Mammary epithelial cell (primary cell): ENCODE measurements at regions of chr12 and their contacts with region 1.

Region 1: DNA sequence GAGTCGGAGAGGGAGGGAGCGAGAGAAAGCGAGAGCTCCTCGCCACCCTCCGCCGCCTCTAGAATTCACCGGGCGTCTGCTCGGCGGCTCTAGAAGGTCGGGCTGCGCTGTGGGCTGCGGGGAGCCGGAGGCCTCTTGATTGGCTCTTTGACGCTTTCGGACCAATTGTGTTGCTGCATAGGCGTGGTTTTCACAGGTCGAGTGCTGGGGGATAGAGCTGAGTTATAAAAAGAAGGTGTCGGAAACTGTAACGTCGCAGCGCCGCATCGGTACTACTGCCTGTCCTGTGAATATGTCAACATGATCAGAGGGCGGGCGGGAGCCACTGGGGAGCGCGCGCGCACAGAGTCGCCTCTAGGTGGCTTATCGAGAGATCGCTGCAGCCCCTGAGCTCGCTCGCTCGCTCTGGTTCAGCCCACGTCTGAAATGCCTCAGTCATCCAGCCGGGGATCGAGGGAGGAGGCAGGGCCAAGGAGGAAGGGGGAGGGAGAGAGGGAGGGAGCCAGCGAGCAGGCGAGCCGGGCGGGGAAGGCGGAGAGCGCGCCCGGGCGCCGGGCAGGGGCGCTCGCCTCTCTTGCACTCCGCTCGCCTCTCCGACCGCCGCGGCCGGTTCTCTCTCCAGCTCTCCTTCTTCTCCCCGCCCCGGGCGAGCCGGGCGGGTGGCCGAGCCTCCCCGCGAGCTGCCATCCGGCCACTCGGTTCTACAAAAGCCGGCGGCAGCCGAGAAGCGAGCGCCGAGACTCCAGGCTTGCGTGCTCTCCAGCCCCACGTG is at the start of gene TBX3:
- DNase-seq: peak; percentile 100
- H3K4me3 ChIP-seq: peak within 1 kb of the TSS; percentile 66 to 100 (median 81)
- H3K27ac ChIP-seq: peak within 1 kb of the TSS; percentile 94
- H3K4me1 ChIP-seq: peaks cover 9% of the 10 kb centered on the region
- H3K27me3 ChIP-seq: no peaks in the 10 kb centered on the region
- CTCF ChIP-seq: peak; percentile 32 to 62
- total RNA-seq, gene TBX3: 30.7 to 33.8 TPM

Region 2: DNA sequence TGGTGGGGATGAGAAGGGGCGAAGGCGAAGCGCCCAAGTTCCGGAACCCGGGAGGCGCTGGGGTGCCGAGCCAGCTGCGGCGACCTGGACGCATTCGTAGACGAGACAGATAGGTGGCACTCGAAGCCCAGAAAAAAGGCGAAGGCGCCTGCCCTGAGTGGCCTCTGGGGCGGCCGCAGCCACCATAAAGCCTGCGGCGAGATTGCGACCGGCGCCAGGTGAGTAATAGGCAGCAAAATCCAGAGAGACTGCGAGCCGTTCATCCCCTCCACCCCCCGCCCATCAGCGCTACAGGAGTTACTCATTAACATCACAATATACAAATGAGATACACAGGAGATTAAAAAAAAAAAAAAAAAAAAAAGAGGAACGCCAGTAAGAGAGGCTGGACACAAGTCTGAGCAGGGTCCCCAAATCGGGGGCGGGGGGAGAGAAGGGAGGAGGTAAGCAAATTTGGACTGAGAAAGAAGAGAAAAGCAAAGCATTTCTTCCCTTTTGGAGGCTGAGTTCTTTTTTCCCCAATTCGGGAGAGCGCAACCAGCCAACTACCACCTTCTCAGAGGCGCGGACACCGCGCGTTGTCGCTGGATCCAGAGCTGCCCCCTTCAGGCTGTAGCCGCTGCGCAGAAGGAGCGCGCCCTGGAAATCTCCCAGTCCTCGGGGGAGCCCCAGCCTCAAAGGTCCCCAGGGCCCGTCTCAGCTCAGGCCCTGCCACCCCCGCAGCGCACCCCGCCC is 16.0 kb before region 1 on chr12:
- CTCF ChIA-PET with region 1: interaction called, 8 read pairs
- dilution Hi-C with region 1: no loop called
- in situ Hi-C with region 1: no loop called
- intact Hi-C with region 1: loop called (anchors 1 kb)
- DNase-seq: peak; percentile 91
- H3K4me3 ChIP-seq: peak overlapping the region; percentile 43 to 60 (median 48)
- H3K27ac ChIP-seq: peak overlapping the region; percentile 75
- H3K4me1 ChIP-seq: peaks cover 41% of the 10 kb centered on the region
- H3K27me3 ChIP-seq: no peaks in the 10 kb centered on the region
- CTCF ChIP-seq: peak; percentile 35 to 69

Region 3: DNA sequence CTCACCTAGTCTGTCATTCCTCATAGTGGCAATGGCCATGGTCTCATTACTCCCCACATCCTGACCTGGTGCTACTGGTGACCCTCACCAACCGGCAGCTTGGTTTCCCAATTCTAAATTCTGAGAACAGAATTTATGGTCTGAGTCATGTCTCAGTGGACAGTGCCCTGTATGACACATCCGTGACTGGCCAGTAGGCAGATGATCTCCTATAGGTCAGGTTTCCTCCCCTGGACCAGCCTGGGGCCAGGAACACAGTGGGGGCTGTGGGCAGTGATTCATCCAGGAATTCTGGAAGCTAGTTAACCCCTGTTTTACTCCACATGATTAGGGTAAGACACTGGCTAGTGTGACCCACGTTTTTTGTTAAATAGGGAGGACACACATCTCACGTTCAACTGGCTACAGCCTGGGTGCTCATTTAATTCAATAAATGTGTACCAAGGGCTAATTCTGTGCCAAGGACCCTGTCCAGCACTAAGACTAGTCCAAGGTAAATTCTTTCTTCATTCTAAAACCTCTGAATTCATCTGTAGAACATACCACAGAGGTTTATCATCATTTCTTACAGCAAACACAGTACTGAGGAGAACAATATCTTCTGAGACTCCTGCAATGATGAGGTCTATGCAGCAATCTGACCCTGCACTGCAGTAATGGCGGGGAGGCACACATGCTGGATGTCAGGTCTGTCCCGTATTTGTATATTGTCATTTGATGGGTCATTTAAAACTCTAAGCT is 249.3 kb after region 1 on chr12:
- CTCF ChIA-PET with region 1: no interaction called
- dilution Hi-C with region 1: no loop called
- in situ Hi-C with region 1: no loop called
- intact Hi-C with region 1: loop called (anchors 5 kb)
- DNase-seq: peak; percentile 83
- H3K4me3 ChIP-seq: no peak overlapping the region
- H3K27ac ChIP-seq: peak overlapping the region; percentile 57
- H3K4me1 ChIP-seq: peaks cover 25% of the 10 kb centered on the region
- H3K27me3 ChIP-seq: no peaks in the 10 kb centered on the region
- CTCF ChIP-seq: no peak

Region 4: DNA sequence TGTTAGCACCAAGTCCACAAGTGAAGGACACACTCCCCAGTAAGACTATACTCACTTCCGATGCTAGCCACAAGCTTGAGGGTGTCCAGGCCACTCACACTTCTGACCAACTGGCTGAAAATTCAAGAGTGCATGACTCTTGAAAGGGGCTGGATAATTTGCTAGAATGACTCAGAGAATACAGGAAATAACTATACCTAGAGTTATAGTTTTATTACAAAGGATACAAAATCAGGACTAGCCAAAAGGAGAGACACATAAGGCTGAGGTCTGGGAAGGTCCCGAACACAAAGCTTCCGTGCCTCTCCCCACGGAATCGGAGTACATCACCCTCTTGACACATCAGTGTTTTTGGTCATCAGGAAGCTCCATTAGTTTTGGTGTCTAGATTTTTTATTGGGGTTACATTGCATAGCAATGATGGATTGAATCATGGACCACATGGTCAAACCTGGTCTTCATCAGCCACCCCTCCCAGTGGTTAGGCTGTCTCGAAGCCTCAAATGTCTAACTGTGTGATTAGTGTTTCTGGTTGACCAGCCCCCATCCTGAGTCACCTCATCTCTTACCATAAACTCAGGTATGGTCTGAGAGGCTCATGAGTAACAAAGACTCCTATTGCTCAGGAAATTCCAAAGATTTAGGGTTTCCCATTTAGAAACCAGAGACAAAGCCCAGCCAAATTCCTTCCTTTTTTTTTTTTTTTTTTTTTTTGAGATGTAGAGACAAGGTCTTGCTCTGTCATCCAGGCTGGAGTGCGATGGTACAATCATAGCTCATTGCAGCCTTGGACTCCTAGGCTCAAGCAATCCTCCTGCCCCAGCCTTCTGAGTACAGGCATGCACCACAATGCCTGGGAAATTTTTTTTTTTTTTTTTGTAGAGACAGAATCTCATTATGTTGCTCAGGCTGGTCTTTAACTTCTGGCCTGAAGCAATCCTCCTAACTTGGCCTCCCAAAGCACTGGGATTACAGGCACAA is 471.7 kb after region 1 on chr12:
- CTCF ChIA-PET with region 1: no interaction called
- dilution Hi-C with region 1: loop called (anchors 5 kb)
- in situ Hi-C with region 1: no loop called
- intact Hi-C with region 1: loop called (anchors 1 kb)
- DNase-seq: peak; percentile 100
- H3K4me3 ChIP-seq: no peak overlapping the region
- H3K27ac ChIP-seq: peak overlapping the region; percentile 83
- H3K4me1 ChIP-seq: peaks cover 31% of the 10 kb centered on the region
- H3K27me3 ChIP-seq: no peaks in the 10 kb centered on the region
- CTCF ChIP-seq: no peak

Region 5: DNA sequence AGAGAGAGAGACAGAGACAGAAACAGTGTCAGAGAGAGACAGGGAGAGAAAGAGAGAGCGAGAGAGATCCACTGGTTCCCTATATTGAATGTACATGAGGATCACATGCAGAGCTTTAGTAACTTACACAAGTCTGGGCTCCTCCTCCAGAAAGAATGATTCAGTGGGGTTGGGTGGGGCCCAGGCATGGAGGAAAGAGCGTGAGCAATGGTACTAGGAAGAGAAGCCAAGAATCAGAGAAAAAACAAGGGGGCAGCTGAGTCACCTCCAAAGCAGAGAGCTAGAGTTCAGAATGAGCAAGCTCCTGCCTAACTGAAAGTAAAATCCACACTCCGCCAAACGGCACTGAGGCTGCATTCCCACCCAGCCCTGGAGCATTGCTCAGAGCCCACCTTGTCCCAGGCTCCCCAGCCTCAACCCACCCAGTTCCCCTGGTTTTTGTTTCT is 669.7 kb after region 1 on chr12:
- CTCF ChIA-PET with region 1: no interaction called
- dilution Hi-C with region 1: no loop called
- in situ Hi-C with region 1: no loop called
- intact Hi-C with region 1: loop called (anchors 5 kb)
- DNase-seq: peak; percentile 99
- H3K4me3 ChIP-seq: peak overlapping the region; percentile 41 to 51 (median 47)
- H3K27ac ChIP-seq: peak overlapping the region; percentile 96
- H3K4me1 ChIP-seq: peaks cover 17% of the 10 kb centered on the region
- H3K27me3 ChIP-seq: no peaks in the 10 kb centered on the region
- CTCF ChIP-seq: no peak

Region 6: GRCh38 chr12:115383669-115384068 is 699.4 kb after region 1 on chr12:
- CTCF ChIA-PET with region 1: no interaction called
- dilution Hi-C with region 1: no loop called
- in situ Hi-C with region 1: loop called (anchors 25 kb)
- intact Hi-C with region 1: loop called (anchors 1 kb)
- DNase-seq: peak; percentile 100
- H3K4me3 ChIP-seq: no peak overlapping the region
- H3K27ac ChIP-seq: peak overlapping the region; percentile 77
- H3K4me1 ChIP-seq: peaks cover 14% of the 10 kb centered on the region
- H3K27me3 ChIP-seq: no peaks in the 10 kb centered on the region
- CTCF ChIP-seq: no peak

Region 7: DNA sequence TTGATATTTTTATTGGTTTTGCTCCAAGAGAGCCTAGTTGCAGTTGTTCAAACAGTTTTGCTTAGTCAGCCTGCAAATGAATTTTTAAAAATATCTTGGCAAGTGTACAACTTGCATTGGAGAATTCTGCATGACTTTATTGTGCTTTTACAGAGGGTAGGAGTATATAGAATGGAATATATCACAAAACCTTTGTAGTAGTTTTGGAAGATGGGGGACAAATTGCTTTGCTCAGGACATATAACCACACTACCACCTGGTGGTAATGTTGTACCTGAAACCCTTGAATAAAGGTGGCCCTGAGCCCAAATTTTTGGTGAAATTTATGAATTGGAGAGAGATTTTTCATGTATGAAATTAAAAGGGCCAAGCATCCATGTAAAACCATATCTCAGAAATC is 948.0 kb after region 1 on chr12:
- CTCF ChIA-PET with region 1: no interaction called
- dilution Hi-C with region 1: no loop called
- in situ Hi-C with region 1: no loop called
- intact Hi-C with region 1: loop called (anchors 5 kb)
- DNase-seq: peak; percentile 8
- H3K4me3 ChIP-seq: no peak overlapping the region
- H3K27ac ChIP-seq: no peak overlapping the region
- H3K4me1 ChIP-seq: no peaks in the 10 kb centered on the region
- H3K27me3 ChIP-seq: peaks cover 3% of the 10 kb centered on the region
- CTCF ChIP-seq: peak; percentile 23 to 61